ENCODE measurements at regions of chr7 and their contacts with region 1.

Region 1: DNA sequence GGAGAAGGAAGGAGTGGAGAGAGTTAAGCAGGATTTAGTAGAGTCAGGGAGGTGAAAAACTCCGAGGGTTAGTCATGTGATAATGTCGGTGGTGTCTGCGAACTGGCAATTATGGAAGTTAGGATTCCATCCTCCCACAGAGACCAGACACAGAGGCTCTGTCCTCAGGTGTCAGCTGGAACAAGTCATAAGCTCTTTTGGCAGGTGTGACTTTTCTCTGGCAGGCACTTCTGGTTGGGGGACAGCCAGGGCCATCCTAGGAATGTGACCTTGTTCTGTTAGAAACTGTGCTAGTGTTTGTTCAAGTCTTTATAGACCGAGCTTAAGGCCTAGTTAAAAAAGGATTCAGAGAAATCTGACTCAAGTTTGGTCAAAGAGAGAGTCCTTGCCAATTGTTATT is 371.0 kb downstream of the DPP6 start:
- DNase-seq: no peak
- ATAC-seq: no peak
- H3K4me3 Mint-ChIP-seq: no peak overlapping the region
- H3K27ac Mint-ChIP-seq: no peak overlapping the region
- H3K4me1 Mint-ChIP-seq: no peaks in the 10 kb centered on the region
- H3K27me3 Mint-ChIP-seq: no peaks in the 10 kb centered on the region
- CTCF ChIP-seq: no peak

Region 2: GRCh38 chr7:154438571-154439367 is 15.5 kb after region 1 on chr7:
- CTCF ChIA-PET with region 1: no interaction called
- POLR2A ChIA-PET with region 1: no interaction called
- intact Hi-C with region 1: no loop called
- DNase-seq: no peak
- ATAC-seq: no peak
- H3K4me3 Mint-ChIP-seq: no peak overlapping the region
- H3K27ac Mint-ChIP-seq: no peak overlapping the region
- H3K4me1 Mint-ChIP-seq: no peaks in the 10 kb centered on the region
- H3K27me3 Mint-ChIP-seq: no peaks in the 10 kb centered on the region
- CTCF ChIP-seq: no peak

Region 3: DNA sequence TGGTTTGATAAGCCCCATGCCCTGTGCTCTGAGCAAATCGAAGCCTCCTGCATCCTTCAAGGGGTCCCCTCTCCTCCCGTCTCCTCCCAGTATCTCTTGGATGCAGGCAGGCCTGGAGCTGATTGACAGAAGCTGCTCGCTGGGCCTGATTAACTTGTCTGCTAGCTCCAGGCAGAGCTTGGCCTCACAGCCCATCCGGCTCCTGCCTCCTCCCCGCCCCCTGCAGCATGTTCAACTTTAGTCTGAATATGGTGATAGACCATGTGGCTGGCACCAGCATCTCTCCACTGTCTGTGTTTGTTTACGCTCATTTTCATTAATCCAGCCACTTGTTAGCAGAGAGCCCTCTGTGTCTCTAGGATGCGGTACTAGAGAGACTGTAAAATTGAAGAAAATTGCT is 61.2 kb after region 1 on chr7:
- CTCF ChIA-PET with region 1: no interaction called
- POLR2A ChIA-PET with region 1: no interaction called
- intact Hi-C with region 1: loop called (anchors 10 kb)
- DNase-seq: no peak
- ATAC-seq: no peak
- H3K4me3 Mint-ChIP-seq: no peak overlapping the region
- H3K27ac Mint-ChIP-seq: no peak overlapping the region
- H3K4me1 Mint-ChIP-seq: no peaks in the 10 kb centered on the region
- H3K27me3 Mint-ChIP-seq: no peaks in the 10 kb centered on the region
- CTCF ChIP-seq: no peak

Measured in activated CD8-positive, alpha-beta T cell treated with anti-CD3 and anti-CD28 coated beads for 36 hours (primary cell).